H1 (cell line): ENCODE measurements at regions of chr7 and their contacts with region 1.

Region 1: GRCh38 chr7:51067757-51068156 is 248.9 kb downstream of the COBL start:
- DNase-seq: peak in 1 of 2 experiments; percentile 84
- H3K4me3 ChIP-seq: no peak overlapping the region
- H3K27ac ChIP-seq: no peak overlapping the region
- H3K4me1 ChIP-seq: peaks cover 0 to 3% (median under 1%) of the 10 kb centered on the region in 4 experiments; a peak in 3 of 7 replicates
- H3K27me3 ChIP-seq: no peaks in the 10 kb centered on the region
- CTCF ChIP-seq: peak in 2 of 3 experiments; percentile 66 to 77; a peak in 3 of 4 replicates
- EP300 ChIP-seq: no peak
- POLR2A ChIP-seq: no peak
- RAD21 ChIP-seq: peak; percentile 63 to 70

Region 2: GRCh38 chr7:50562136-50562535 is 505.6 kb before region 1 on chr7:
- CTCF ChIA-PET with region 1: no interaction called
- POLR2A ChIA-PET with region 1: no interaction called
- DNase-seq: no peak
- H3K4me3 ChIP-seq: no peak overlapping the region
- H3K27ac ChIP-seq: no peak overlapping the region
- H3K4me1 ChIP-seq: peaks cover 0 to 3% (median 0%) of the 10 kb centered on the region in 4 experiments; a peak in 2 of 7 replicates
- H3K27me3 ChIP-seq: no peaks in the 10 kb centered on the region
- CTCF ChIP-seq: peak; percentile 21 to 35 (median 35); a peak in 2 of 4 replicates
- EP300 ChIP-seq: no peak
- POLR2A ChIP-seq: no peak
- RAD21 ChIP-seq: peak; percentile 22 to 43; a peak in 2 of 4 replicates

Region 3: DNA sequence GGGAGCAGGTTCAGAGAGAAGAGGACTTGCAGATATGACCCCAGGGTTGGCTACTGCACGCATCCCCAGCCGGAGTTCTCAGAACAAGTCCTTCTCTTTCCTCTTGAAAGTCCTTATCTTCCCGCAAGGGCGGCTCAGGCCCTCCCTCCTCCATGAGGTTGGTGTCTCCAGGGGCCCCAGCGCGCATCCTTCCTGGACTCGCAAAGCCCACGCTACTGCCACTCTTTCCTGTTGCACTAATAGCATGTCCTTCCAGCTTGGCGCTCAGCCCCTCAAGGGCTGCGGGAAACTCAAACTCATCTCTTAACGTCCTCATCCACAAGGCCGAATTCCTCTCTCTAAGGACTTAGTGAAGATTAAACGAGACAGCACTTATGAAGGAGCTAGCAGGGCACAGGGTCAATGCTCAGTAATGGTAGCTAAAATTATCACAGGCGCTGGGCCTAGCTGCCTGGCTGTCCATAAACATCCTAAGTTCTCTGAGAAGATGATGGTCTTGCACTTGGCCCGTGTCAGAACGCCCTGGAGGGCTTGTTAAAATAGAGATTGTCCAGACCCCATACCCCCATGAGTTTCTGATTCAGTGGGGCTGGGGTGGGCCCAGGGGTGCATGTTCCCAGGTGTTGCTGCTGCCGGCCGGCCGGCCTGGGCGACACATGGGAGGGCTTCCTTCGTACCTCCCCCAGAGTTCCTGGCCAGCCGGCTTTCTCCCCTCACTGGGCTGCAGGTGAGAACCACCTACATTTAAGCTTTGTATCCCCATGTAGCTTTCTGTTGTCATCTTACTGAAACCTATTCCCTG is 12.5 kb before region 1 on chr7:
- CTCF ChIA-PET with region 1: interaction called, 15 read pairs
- POLR2A ChIA-PET with region 1: no interaction called
- DNase-seq: no peak
- H3K4me3 ChIP-seq: no peak overlapping the region
- H3K27ac ChIP-seq: no peak overlapping the region
- H3K4me1 ChIP-seq: no peaks in the 10 kb centered on the region; a peak in 1 of 7 replicates
- H3K27me3 ChIP-seq: no peaks in the 10 kb centered on the region
- CTCF ChIP-seq: no peak
- EP300 ChIP-seq: no peak
- POLR2A ChIP-seq: no peak
- RAD21 ChIP-seq: no peak

Region 4: GRCh38 chr7:51080622-51081269 is 13.0 kb after region 1 on chr7:
- CTCF ChIA-PET with region 1: interaction called, 70 read pairs
- POLR2A ChIA-PET with region 1: interaction called, 3 read pairs
- DNase-seq: peak; percentile 79 to 82
- H3K4me3 ChIP-seq: peak overlapping the region in 1 of 4 experiments; percentile 40; a peak in 1 of 8 replicates
- H3K27ac ChIP-seq: peak overlapping the region; percentile 90
- H3K4me1 ChIP-seq: peaks cover 10 to 26% (median 13%) of the 10 kb centered on the region in 4 experiments
- H3K27me3 ChIP-seq: no peaks in the 10 kb centered on the region
- CTCF ChIP-seq: no peak
- EP300 ChIP-seq: no peak
- POLR2A ChIP-seq: peak in 1 of 2 experiments; percentile 51; a peak in 1 of 3 replicates
- RAD21 ChIP-seq: no peak